ENCODE measurements at regions of chr11 and their contacts with region 1.

Region 1: GRCh38 chr11:102317099-102317767 is at the start of gene BIRC3:
- DNase-seq: peak; percentile 93
- H3K4me3 Mint-ChIP-seq: peak within 1 kb of the TSS; percentile 97
- H3K27ac Mint-ChIP-seq: peak within 1 kb of the TSS; percentile 95
- H3K4me1 Mint-ChIP-seq: peaks cover 70% of the 10 kb centered on the region
- H3K27me3 Mint-ChIP-seq: no peaks in the 10 kb centered on the region
- total RNA-seq, gene BIRC3: 101 and 108 TPM in 2 replicates

Region 2: DNA sequence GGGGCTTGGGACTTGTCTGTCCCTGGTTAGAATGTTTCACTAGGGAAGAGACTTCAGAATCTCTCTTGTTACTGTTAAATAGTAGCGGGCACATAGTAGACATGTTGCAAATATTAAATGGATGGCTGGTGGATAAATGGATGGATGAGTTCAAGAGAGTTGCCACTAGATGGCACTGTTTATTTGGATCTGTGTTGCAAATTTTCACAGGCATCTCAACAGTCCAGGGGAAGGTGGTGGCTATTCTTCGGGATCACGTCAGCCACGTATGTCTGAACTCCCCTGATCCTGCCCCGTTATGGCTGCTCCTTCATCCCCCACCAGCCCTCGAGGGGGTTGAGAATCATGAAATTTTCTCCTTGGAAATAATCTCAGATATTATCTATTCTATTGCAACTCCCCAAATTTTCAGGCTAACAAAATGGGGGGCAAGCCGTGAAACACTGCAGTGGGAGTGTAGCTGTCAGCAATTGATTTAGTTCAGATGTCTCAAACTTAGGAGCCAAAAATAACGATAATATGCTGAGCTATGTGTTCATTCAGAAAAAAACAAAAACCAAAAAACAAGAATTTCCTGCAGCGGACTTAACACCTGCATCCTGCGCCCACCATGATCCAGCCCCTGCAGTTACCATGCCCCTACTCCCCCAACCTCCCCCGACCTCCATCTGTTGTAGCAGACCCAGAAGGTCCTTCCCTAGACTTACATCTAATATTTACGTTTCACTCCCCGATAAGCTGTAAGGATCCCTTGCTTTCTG is 29.1 kb before region 1 on chr11:
- intact Hi-C with region 1: loop called (anchors 1 kb)
- DNase-seq: peak; percentile 24
- H3K4me3 Mint-ChIP-seq: peak overlapping the region; percentile 8
- H3K27ac Mint-ChIP-seq: peak overlapping the region; percentile 35
- H3K4me1 Mint-ChIP-seq: peaks cover 39% of the 10 kb centered on the region
- H3K27me3 Mint-ChIP-seq: no peaks in the 10 kb centered on the region

Region 3: DNA sequence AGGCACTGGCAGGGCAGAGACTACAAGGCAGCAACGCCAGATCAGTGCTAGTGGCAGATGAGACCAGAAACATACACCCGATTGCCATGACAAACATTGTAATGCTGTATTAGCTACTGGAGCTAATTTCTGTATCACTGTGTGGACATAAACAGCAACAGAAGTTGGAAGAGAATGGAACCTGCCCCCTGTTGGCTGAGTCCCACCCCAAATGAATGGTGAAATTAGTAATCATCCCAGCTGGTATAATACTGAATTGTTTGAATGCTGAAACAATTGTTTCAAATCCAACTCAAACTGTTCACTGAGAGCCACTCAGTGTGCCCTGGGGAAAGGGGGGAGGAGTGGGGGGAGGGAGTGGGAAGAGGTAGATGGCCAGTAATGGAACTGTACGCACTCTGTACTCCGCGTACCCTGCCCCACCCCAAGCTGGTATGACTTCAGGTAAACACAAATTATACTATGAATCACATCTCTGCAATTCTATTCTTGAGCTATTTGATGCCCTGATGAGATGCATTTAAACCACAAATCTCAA is 11.1 kb before region 1 on chr11:
- intact Hi-C with region 1: loop called (anchors 1 kb)
- DNase-seq: no peak
- H3K4me3 Mint-ChIP-seq: peak overlapping the region; percentile 72
- H3K27ac Mint-ChIP-seq: peak overlapping the region; percentile 59
- H3K4me1 Mint-ChIP-seq: peaks cover 57% of the 10 kb centered on the region
- H3K27me3 Mint-ChIP-seq: no peaks in the 10 kb centered on the region

Region 4: DNA sequence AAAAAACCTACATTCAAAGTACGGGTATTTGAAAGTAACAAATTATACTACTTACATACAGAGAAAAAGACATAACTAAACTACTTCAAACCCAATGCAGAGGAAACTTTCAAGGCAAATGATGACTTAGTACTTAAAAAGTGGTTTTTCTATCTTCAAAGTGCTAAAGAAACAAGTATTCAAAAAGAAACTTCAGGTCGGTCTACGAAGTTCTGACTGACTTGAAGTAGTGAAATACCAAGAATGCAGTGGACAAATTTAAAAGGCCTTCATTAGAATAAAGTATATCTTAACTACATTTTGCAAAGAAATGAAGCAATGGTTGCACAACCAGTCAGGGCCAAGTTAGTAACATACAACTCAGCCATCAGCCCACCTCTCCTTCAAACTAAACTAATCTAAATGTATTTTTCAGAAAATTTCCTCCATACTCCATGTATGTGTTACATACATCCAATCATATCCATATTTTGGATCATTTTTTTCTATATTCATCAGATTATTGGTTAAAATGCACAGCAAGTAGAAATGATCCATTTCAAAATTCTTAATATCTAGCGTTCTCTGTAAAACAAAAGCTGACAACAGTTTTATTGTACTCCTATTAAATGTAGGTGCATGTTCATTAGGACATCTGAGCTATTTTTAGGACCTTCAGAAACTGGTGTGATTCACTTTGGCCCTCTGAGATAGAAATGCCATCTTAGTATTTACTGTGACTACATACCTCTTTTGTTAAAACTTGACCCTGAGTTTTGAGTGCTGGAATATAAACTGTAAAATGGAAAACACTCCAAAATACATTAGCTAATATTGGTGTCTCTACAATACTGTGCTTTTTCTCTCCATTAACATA is 79.7 kb after region 1 on chr11:
- intact Hi-C with region 1: loop called (anchors 2 kb)
- DNase-seq: no peak
- H3K4me3 Mint-ChIP-seq: peak overlapping the region; percentile 45
- H3K27ac Mint-ChIP-seq: peak overlapping the region; percentile 63
- H3K4me1 Mint-ChIP-seq: peaks cover 52% of the 10 kb centered on the region
- H3K27me3 Mint-ChIP-seq: no peaks in the 10 kb centered on the region

Region 5: GRCh38 chr11:102560555-102561011 is 243.3 kb after region 1 on chr11:
- intact Hi-C with region 1: loop called (anchors 1 kb)
- DNase-seq: no peak
- H3K4me3 Mint-ChIP-seq: peak overlapping the region; percentile 63
- H3K27ac Mint-ChIP-seq: no peak overlapping the region
- H3K4me1 Mint-ChIP-seq: peaks cover 50% of the 10 kb centered on the region
- H3K27me3 Mint-ChIP-seq: peaks cover 2% of the 10 kb centered on the region

Region 6: DNA sequence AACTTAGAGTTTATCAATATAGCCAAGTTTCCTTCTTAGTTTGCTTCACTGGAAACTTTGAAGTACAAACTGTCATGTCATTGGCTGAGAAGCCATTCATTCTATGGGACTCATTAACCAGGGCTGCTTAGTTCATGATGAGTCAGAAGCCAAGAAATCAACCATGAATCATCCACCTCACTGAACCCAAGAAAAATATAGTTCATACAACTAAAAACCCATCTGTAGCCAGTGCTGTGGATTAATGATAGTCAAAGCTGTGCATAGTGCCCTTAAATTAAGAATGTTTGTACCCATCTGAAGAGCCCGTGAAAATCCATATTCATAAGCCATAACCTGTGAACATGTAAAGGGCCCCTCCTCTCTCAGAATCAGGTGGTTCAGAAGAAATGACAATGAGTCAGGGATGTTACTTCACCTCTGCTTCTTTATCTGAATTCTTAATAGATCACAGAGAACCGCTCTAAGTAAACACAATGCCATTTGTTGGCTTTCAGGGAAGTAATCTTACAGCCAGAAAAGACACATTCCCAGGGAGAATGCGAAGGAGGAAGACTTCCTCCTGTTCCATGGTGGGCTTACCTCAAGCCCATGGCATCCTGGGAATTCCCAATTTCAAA is 282.5 kb after region 1 on chr11:
- intact Hi-C with region 1: loop called (anchors 1 kb)
- DNase-seq: no peak
- H3K4me3 Mint-ChIP-seq: no peak overlapping the region
- H3K27ac Mint-ChIP-seq: peak overlapping the region; percentile 64
- H3K4me1 Mint-ChIP-seq: peaks cover 47% of the 10 kb centered on the region
- H3K27me3 Mint-ChIP-seq: no peaks in the 10 kb centered on the region

Region 7: DNA sequence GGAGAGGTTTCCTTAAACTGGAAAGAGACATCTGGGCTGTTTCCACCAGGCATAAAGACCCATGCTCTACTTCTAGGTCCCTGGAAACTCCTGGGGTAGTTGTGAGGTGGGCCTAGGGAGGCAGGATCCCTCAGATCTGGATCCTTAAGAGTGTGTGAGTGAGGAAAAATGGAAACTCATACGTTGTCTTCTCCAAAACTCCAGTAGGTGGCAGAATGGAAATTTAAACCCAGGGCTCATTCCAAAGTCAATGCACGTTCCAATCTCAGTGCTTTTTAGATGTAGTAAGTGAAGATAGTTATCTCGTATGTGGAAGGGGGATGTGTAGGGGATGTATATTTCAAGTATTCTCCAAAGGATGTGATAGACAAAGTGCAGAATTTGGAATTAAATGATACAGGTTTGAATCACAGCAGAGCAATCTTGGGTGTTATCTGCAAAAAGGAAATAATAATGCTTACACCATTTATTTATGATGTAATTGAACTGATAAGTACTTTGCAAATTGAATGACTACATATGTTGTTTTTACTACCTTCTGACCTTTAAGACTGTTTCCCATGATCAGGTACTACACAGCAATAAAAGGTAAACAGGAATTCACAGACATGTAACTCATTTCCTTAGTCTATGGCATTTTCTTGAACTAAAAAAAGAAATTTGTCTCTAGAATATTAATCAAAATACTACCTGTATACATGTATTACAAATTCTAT is 493.9 kb after region 1 on chr11:
- intact Hi-C with region 1: no loop called
- DNase-seq: no peak
- H3K4me3 Mint-ChIP-seq: no peak overlapping the region
- H3K27ac Mint-ChIP-seq: no peak overlapping the region
- H3K4me1 Mint-ChIP-seq: no peaks in the 10 kb centered on the region
- H3K27me3 Mint-ChIP-seq: peaks cover 1% of the 10 kb centered on the region

Region 8: DNA sequence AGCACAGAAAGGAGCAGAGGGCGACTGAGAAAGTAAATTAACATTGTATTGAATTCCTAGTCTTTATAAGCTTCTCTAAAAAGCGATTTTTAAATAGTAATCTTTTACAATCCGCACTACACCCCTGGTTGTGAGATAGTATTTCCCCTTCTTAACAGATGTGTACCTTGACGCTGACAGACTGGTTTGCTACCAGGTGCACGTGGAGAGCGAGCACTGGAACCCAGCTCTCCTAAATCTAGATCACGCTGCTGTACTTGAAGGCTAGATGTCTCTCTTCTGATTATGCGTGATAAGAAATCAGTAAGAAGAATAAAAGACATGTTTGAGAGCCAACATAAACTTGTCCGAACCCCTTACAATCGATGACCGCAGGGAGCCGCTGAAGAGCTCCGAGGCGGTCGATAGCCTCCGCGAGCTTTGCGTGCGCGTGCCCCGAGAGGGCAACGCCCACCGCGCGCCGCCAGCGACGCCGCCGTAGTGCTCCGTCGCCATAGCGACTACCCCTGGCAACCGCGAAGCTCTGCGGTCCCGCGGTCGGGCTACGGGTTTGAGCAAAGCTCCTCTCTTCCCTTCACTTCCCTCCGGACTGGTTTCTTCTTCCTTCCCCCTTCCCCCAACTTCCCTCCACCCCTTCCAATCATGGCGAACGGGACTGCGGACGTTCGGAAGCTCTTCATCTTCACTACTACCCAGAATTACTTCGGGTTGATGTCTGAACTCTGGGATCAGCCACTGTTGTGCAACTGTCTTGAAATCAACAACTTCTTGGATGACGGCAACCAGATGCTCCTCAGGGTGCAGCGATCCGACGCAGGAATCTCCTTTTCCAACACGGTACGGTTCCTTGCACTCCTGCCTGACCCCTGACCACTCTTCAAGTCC is 791.9 kb after region 1 on chr11 and contains the start of gene DYNC2H1:
- intact Hi-C with region 1: loop called (anchors 2 kb)
- DNase-seq: peak; percentile 87
- H3K4me3 Mint-ChIP-seq: peak within 1 kb of the TSS; percentile 92
- H3K27ac Mint-ChIP-seq: peak within 1 kb of the TSS; percentile 90
- H3K4me1 Mint-ChIP-seq: peaks cover 8% of the 10 kb centered on the region
- H3K27me3 Mint-ChIP-seq: peaks cover 35% of the 10 kb centered on the region
- total RNA-seq, gene DYNC2H1: 0.91 and 1.1 TPM in 2 replicates

Measured in activated T-helper 1 cell treated with anti-CD3 and anti-CD28 coated beads, Interleukin-12 subunit alpha, Interleukin-12 subunit beta, Interleukin-2, Interleukin-4 antibody, amounts not matched to agents 30 ng/mL and 10 ng/mL and 1 ng/mL, durations not matched to agents 14 hours and 24 hours and 36 hours (primary cell).